ENCODE measurements at regions of chr1 and their contacts with region 1.

Region 1: DNA sequence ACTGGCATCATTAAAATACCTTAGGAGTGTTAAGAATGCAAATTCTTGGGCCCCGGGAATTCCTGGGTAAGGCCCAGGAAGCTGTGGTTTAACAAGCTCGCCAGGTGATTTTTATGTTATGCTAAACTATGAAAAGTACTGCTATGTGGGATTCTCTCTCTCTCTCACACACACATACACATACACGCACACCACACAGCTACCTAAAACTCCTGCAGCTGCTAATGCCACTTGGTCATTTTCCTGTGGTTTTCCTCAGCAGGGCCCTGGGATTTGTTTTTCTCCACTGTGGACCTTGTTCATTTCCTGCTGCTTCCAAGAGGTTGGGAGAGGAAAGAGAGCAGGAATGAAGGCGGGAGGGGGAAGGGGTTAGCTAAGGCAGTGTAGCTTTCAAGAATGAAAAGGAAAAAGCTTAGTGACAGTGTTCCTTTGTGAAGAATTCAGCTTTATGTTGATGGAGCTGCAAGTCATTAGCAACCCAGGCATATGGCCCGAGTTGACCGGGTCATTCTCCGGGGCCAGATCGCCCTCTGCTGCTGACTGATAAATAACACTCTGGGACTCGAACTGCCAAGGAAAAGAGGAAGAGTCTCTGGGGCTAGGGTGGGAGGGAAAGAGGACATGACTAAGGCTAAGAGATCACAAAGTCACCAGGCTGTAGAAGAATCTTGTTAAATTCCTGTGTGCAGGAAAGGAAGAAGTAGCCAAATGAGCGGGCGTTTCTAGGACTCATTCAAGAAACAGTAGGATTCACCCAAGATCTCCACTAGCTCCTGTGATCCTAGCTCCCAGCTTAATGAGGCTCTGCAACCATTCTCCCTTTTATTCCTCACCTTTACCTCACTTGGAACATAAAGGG is 30.5 kb upstream of the LRIG2 start:
- DNase-seq: peak; percentile 78
- ATAC-seq: peak; percentile 94
- H3K4me3 ChIP-seq: no peak overlapping the region
- H3K27ac ChIP-seq: no peak overlapping the region
- H3K4me1 ChIP-seq: peaks cover 10% of the 10 kb centered on the region
- H3K27me3 ChIP-seq: no peaks in the 10 kb centered on the region
- CTCF ChIP-seq: peak; percentile 66
- POLR2A ChIP-seq: no peak
- RAD21 ChIP-seq: peak; percentile 81

Region 2: DNA sequence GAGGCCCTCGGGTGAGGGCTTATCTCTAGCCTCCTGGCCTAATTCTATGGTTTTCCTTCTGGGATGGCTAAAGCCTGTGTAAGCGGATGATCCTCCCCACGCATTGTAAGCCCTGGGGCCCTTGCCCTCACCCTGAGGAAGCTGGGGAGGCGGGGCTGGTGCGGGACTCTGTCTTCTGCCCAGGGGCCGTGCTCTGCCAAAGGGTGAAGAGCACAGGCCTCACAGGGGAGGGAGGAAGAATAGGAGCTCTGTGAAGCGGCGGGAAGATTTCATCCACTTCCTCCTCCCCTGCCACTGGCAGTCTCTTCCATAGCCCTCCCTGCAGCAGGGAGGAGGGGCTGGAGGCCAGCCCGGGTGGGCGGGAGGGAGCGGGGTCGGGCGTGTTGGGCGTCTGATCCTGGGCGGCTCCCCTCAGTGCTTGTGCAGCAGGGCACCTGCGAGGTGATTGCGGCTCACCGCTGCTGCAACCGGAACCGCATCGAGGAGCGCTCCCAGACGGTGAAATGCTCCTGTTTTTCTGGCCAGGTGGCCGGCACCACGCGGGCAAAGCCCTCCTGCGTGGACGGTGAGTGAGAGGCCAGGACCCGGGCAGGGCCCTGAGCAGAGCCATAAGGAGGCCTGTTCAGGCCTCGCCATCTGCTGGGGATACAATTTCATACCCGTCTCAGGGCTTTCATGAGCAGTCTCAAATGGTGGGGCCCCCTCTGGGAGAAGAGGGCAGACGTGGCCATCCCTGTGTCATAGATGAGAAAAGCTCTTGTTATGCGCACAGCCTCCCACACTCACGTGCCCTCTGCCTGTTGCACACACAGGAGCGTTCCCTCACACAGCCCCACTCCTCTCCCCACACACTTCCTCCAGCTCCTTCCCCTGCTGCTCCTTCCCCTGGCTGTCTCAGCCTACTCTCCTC is 319.7 kb before region 1 on chr1:
- CTCF ChIA-PET with region 1: interaction called, 4 read pairs
- POLR2A ChIA-PET with region 1: no interaction called
- dilution Hi-C with region 1: no loop called
- in situ Hi-C with region 1: loop called (anchors 10 kb)
- intact Hi-C with region 1: no loop called
- DNase-seq: peak; percentile 77
- ATAC-seq: peak; percentile 32
- H3K4me3 ChIP-seq: no peak overlapping the region
- H3K27ac ChIP-seq: no peak overlapping the region
- H3K4me1 ChIP-seq: peaks cover 10% of the 10 kb centered on the region
- H3K27me3 ChIP-seq: peaks cover 4% of the 10 kb centered on the region; the same call in 1 of the 2 replicates
- CTCF ChIP-seq: no peak
- POLR2A ChIP-seq: 0 out of 2 replicates have a peak, but pooled peaks have one; percentile 30
- RAD21 ChIP-seq: no peak

Region 3: DNA sequence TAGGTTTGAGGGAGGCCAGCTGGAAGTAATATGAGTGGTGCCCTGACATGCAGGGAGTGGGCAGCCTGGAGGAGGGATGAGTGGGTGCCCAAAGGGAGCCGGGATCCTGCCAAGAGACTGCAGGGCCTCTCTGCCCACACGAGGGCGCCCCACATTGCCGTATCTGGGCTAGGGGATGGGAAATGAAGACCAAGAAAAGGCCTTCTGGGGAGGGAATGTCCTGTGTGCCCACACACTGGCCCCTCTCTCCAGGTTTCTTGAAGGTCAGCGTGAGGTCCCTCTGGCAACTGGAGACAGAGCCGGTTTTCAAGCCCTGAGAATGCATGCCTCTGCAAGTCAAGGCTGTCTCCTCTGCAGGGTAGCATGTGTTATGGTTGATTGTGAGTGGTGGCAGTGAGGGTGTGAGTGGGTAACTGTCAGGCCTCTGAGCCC is 233.2 kb before region 1 on chr1:
- CTCF ChIA-PET with region 1: interaction called, 7 read pairs
- POLR2A ChIA-PET with region 1: no interaction called
- dilution Hi-C with region 1: no loop called
- in situ Hi-C with region 1: loop called (anchors 5 kb)
- intact Hi-C with region 1: loop called (anchors 1 kb)
- DNase-seq: peak; percentile 57
- ATAC-seq: peak; percentile 98
- H3K4me3 ChIP-seq: no peak overlapping the region
- H3K27ac ChIP-seq: no peak overlapping the region
- H3K4me1 ChIP-seq: no peaks in the 10 kb centered on the region
- H3K27me3 ChIP-seq: peaks cover 9% of the 10 kb centered on the region
- CTCF ChIP-seq: peak; percentile 87
- POLR2A ChIP-seq: no peak
- RAD21 ChIP-seq: peak; percentile 89

Region 4: GRCh38 chr1:112882271-112882744 is 160.2 kb before region 1 on chr1:
- CTCF ChIA-PET with region 1: interaction called, 17 read pairs
- POLR2A ChIA-PET with region 1: no interaction called
- dilution Hi-C with region 1: no loop called
- in situ Hi-C with region 1: loop called (anchors 5 kb)
- intact Hi-C with region 1: loop called (anchors 1 kb)
- DNase-seq: no peak
- ATAC-seq: no peak
- H3K4me3 ChIP-seq: no peak overlapping the region
- H3K27ac ChIP-seq: no peak overlapping the region
- H3K4me1 ChIP-seq: peaks cover 5% of the 10 kb centered on the region
- H3K27me3 ChIP-seq: peaks cover 5% of the 10 kb centered on the region
- CTCF ChIP-seq: no peak
- POLR2A ChIP-seq: no peak
- RAD21 ChIP-seq: no peak

Region 5: DNA sequence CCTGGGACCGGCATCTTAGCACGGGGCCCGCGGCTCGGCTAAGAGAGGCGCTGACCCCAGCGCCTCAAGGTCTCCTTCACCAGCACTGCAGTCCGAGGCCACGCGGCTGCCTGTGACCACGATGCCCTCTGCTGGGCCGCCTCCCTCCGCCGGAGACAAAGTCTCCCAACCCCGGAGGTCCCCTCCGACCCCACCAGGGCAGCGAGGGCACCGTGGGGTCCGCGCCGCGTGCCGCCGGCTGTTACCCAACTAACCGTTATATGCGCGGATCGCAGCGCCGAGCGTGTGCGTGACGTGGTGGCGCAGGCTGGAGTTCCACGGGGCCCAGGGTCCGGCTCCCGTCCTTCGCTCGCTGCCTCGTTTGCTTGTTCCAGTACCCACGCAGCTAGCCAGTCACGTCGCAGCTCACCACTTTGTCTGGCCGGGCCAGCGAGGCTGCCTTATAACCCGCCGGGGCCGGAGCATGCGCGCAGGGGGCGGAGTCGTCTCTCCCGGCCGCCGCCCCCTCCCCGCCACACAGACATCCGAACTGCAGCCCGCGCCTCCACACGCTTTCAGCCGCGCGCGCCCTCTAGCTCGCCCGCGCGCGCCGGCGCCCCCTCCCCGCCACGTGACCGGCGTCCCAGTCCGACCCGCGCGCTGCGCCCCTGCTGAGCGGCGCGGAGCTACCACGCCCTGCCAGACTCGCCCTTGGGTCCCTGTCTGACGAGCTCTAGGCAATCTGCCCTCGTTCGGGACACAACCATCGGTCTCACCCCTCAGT is 86.6 kb before region 1 on chr1 and contains the start of gene SLC16A1:
- CTCF ChIA-PET with region 1: interaction called, 13 read pairs
- POLR2A ChIA-PET with region 1: no interaction called
- dilution Hi-C with region 1: no loop called
- in situ Hi-C with region 1: no loop called
- intact Hi-C with region 1: loop called (anchors 1 kb)
- DNase-seq: peak; percentile 91
- ATAC-seq: peak; percentile 88
- H3K4me3 ChIP-seq: peak within 1 kb of the TSS; percentile 80
- H3K27ac ChIP-seq: peak within 1 kb of the TSS; percentile 90
- H3K4me1 ChIP-seq: no peaks in the 10 kb centered on the region
- H3K27me3 ChIP-seq: no peaks in the 10 kb centered on the region
- CTCF ChIP-seq: peak; percentile 38
- POLR2A ChIP-seq: peak; percentile 98
- RAD21 ChIP-seq: peak; percentile 32
- total RNA-seq, gene SLC16A1: 156 and 187 TPM in 2 replicates

Region 6: GRCh38 chr1:113072757-113073478 is 30.4 kb after region 1 on chr1 and contains the start of gene LRIG2:
- CTCF ChIA-PET with region 1: interaction called, 12 read pairs
- POLR2A ChIA-PET with region 1: no interaction called
- dilution Hi-C with region 1: no loop called
- in situ Hi-C with region 1: no loop called
- intact Hi-C with region 1: no loop called
- DNase-seq: peak; percentile 97
- ATAC-seq: peak; percentile 98
- H3K4me3 ChIP-seq: peak within 1 kb of the TSS; percentile 85
- H3K27ac ChIP-seq: peak within 1 kb of the TSS; percentile 97
- H3K4me1 ChIP-seq: no peaks in the 10 kb centered on the region; the same call in 1 of the 2 replicates
- H3K27me3 ChIP-seq: no peaks in the 10 kb centered on the region
- CTCF ChIP-seq: peak; percentile 58
- POLR2A ChIP-seq: peak; percentile 60
- RAD21 ChIP-seq: peak; percentile 48; the same call in 1 of the 2 replicates
- total RNA-seq, gene LRIG2: 9.0 and 10.6 TPM in 2 replicates

Measured in IMR-90 (cell line).